ENCODE measurements at regions of chr10 and their contacts with region 1.

Region 1: DNA sequence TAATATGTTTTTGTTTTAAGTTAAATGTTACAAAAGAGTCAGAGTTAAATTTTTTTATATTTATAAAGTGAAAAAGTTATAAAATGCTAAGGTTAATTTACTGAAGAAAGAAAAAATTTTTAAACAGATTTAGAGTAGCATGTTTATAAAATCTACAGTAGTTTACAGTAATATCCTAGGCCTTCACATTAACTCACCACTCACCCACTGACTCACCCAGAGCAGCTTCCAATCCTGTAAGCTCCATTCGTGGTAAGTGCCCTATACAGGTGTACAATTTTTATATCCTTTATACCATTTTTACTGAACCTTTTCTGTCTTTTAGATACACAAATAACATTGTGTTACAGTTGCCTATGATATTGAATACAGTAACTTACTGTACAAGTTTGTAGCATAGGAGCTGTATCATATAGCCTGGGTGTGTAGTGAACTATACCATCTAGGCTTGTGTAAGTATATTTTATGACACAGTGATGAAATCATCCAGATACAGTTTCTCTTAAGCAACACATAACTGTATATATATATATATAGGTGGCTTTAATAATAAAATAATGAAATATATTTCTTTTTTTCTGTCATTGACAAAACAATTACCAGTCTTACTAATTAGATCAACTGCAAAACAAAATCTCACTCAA is 79.6 kb downstream of the PTEN start:
- DNase-seq: no peak

Region 2: GRCh38 chr10:87734987-87735827 is 207.8 kb before region 1 on chr10:
- intact Hi-C with region 1: no loop called
- DNase-seq: no peak

Region 3: DNA sequence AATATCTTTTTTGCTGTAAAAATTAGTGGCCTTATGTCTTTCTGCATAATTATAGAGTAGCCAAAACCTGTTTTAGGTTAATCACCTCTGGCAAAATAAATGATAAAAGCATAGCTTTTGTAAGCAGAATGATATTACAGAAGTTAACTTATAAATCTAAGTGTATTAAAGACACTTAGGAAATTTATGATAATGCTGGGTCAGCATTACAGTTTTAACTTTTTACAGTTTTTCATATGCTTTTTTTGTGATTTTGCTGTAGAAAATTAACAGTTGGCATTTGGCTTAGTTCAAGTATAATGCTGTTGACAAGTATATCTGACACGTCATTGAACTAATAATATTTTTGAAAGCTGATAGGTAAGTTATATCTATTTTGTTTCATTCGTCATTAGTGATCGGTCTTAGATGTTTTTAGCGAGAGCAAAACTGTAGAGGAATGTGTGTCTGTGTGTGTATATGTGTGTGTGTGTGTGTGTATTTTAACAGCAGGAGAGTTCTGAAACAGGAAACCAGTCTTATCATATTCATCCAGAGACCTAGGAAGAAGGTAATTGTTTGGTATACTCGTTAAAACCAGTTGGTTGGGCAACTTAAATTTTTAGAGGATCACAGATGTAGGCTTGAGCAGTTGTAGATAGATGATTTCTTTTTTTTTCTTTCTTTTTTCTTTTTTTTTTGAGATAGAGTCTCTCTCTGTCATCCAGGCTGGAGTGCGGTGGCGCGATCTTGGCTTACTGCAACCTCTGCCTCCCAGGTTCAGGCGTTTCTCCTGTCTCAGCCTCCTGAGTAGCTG is 64.1 kb before region 1 on chr10:
- intact Hi-C with region 1: loop called (anchors 10 kb)
- DNase-seq: no peak

Measured in cardiac septum (tissue), 1 donor.